PC-9 (cell line): ENCODE measurements at regions of chr7 and their contacts with region 1.

Region 1: DNA sequence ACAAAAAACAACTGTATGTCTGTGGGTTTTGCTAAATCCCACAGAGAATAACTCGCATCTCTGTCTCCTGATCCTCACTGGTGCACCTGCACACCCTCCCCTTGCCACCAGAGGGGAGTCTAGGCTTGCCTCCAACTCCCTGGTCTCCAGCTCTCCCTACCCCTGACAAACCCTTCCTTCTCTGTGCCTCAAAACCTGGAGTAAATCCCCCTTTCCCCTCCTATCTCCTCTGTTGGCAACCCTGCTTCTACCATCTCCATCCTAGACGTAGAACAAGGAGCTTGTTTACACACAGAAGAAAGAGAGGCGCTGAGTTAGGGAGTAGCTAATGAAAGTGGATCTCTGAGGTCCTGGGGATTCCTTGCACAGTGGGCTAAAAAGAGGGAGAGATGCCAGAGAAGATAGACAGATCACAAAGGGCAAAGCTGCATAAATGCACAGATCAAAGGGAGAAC is 6.0 kb downstream of the MBLAC1 start:
- DNase-seq: peak; percentile 49 to 74
- H3K4me3 ChIP-seq: no peak overlapping the region
- H3K27ac ChIP-seq: no peak overlapping the region
- H3K4me1 ChIP-seq: peaks cover 17% of the 10 kb centered on the region
- H3K27me3 ChIP-seq: no peaks in the 10 kb centered on the region
- CTCF ChIP-seq: peak; percentile 89

Region 2: GRCh38 chr7:99910976-99911375 is 221.7 kb before region 1 on chr7:
- CTCF ChIA-PET with region 1: no interaction called
- POLR2A ChIA-PET with region 1: no interaction called
- intact Hi-C with region 1: loop called (anchors 1 kb)
- DNase-seq: no peak
- H3K4me3 ChIP-seq: no peak overlapping the region
- H3K27ac ChIP-seq: no peak overlapping the region
- H3K4me1 ChIP-seq: no peaks in the 10 kb centered on the region
- H3K27me3 ChIP-seq: no peaks in the 10 kb centered on the region
- CTCF ChIP-seq: no peak

Region 3: DNA sequence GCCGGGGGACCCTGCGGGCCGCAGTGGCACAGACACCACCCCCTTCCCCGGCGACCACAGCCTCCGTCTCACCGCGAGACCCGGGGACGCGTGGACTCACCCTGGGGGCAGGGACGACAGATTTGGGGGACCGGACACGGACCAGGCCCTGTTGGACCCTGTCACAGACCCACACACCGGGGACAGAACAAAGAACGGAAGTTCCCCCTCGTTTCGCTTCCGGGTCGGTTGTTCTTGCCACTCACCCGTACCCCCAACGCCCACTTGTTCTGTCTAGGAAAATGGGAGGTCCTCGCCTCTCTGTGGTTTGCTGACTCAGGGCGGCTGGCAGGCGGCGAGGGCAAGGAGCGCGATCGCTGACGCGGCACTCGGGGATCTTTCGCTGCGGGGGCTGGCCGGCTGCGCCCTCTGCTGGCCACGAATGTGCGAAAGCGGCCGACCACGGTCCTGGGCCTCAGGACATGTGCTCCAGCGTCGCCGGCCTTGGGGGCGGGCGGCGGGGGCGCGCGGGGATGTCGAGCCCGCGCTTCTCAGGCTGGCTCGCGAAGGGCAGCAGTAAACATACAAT is 51.1 kb before region 1 on chr7 and contains the start of gene ZNF3:
- CTCF ChIA-PET with region 1: interaction called, 10 read pairs
- POLR2A ChIA-PET with region 1: interaction called, 10 read pairs
- intact Hi-C with region 1: loop called (anchors 1 kb)
- DNase-seq: peak; percentile 95 to 99
- H3K4me3 ChIP-seq: peak within 1 kb of the TSS; percentile 93
- H3K27ac ChIP-seq: peak within 1 kb of the TSS; percentile 79
- H3K4me1 ChIP-seq: peaks cover 16% of the 10 kb centered on the region
- H3K27me3 ChIP-seq: no peaks in the 10 kb centered on the region
- CTCF ChIP-seq: peak; percentile 92
- total RNA-seq, gene ZNF3: 35.2 and 39.0 TPM in 2 replicates

Region 4: GRCh38 chr7:100148559-100149350 is 16.0 kb after region 1 on chr7 and contains the start of gene LAMTOR4:
- CTCF ChIA-PET with region 1: interaction called, 15 read pairs
- POLR2A ChIA-PET with region 1: interaction called, 21 read pairs
- intact Hi-C with region 1: no loop called
- DNase-seq: peak; percentile 95 to 99
- H3K4me3 ChIP-seq: peak within 1 kb of the TSS; percentile 97
- H3K27ac ChIP-seq: no peak within 1 kb of the TSS
- H3K4me1 ChIP-seq: peaks cover 36% of the 10 kb centered on the region
- H3K27me3 ChIP-seq: no peaks in the 10 kb centered on the region
- CTCF ChIP-seq: no peak
- total RNA-seq, gene LAMTOR4: 160 and 285 TPM in 2 replicates

Region 5: DNA sequence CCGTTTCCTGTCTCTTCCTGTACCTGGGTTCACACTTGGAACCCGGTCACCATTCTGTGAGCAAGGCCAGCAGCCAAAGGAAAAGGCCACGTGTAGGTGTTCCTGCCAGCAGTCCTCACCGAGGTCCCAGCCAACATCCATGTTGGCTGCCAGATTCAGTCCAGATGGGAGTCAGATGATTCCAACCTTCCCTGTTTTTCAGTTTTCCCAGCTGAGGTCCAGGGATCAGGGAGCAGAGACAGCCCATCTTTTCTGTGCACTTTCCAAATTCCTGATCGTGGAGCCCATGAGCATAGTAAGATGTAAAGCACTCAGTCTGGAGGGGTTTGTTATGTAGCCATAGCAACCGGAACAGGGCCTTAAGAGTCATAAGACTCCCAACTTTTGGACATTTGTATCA is 83.2 kb after region 1 on chr7:
- CTCF ChIA-PET with region 1: interaction called, 5 read pairs
- POLR2A ChIA-PET with region 1: no interaction called
- intact Hi-C with region 1: loop called (anchors 2 kb)
- DNase-seq: no peak
- H3K4me3 ChIP-seq: no peak overlapping the region
- H3K27ac ChIP-seq: no peak overlapping the region
- H3K4me1 ChIP-seq: peaks cover 11% of the 10 kb centered on the region
- H3K27me3 ChIP-seq: no peaks in the 10 kb centered on the region
- CTCF ChIP-seq: no peak

Region 6: GRCh38 chr7:100407285-100408180 is 274.8 kb after region 1 on chr7:
- CTCF ChIA-PET with region 1: interaction called, 9 read pairs
- POLR2A ChIA-PET with region 1: interaction called, 4 read pairs
- intact Hi-C with region 1: loop called (anchors 1 kb)
- DNase-seq: peak; percentile 46 to 74
- H3K4me3 ChIP-seq: no peak overlapping the region
- H3K27ac ChIP-seq: no peak overlapping the region
- H3K4me1 ChIP-seq: no peaks in the 10 kb centered on the region
- H3K27me3 ChIP-seq: no peaks in the 10 kb centered on the region
- CTCF ChIP-seq: peak; percentile 84

Region 7: DNA sequence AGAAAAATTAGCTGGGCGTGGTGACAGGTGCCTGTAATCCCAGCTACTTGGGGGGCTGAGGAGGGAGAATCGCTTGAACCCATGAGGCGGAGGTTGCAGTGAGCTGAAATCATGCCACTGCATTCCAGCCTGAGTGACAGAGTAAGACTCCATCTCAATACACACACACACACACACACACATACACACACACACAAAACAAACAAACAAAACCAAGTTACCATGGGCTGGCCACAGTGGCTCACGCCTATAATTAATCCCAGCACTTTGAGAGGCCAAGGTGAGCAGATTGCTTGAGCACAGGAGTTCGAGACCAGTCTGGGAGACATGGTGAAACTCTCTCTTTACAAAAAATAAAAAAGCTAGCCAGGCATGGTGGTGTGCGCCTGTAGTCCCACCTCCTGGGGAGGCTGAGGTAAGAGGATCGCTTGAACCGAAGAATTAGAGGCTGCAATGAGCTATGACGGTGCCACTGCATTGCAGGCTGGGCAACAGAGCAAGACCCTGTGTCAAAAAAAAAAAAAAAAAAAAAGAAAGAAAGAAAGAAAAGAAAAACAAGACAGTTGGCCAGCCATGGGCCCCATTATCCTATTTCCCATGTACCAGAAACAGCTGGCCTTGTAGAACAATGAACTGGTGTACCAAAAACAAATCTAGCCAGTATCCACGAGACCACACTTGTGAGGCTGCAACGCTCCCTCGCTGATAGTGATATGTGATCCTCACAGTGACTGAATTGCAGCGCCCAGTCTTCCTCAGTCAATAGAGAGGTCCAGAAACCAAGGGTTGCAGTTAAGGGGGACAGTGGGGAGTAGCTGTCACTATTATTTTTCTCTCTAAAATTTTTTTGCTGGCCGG is 399.7 kb after region 1 on chr7:
- CTCF ChIA-PET with region 1: no interaction called
- POLR2A ChIA-PET with region 1: no interaction called
- intact Hi-C with region 1: no loop called
- DNase-seq: no peak
- H3K4me3 ChIP-seq: no peak overlapping the region
- H3K27ac ChIP-seq: no peak overlapping the region
- H3K4me1 ChIP-seq: no peaks in the 10 kb centered on the region
- H3K27me3 ChIP-seq: no peaks in the 10 kb centered on the region
- CTCF ChIP-seq: no peak